Endothelial cell of umbilical vein (primary cell): ENCODE measurements at regions of chr11 and their contacts with region 1.

Region 1: GRCh38 chr11:14148653-14149273 is 186.2 kb downstream of the SPON1 start:
- DNase-seq: peak; percentile 36
- H3K4me3 ChIP-seq: no peak overlapping the region
- H3K27ac ChIP-seq: no peak overlapping the region
- H3K4me1 ChIP-seq: no peaks in the 10 kb centered on the region
- H3K27me3 ChIP-seq: peaks cover 0 to under 1% of the 10 kb centered on the region in 2 experiments
- CTCF ChIP-seq: peak; percentile 21 to 38
- POLR2A ChIP-seq: no peak

Region 2: DNA sequence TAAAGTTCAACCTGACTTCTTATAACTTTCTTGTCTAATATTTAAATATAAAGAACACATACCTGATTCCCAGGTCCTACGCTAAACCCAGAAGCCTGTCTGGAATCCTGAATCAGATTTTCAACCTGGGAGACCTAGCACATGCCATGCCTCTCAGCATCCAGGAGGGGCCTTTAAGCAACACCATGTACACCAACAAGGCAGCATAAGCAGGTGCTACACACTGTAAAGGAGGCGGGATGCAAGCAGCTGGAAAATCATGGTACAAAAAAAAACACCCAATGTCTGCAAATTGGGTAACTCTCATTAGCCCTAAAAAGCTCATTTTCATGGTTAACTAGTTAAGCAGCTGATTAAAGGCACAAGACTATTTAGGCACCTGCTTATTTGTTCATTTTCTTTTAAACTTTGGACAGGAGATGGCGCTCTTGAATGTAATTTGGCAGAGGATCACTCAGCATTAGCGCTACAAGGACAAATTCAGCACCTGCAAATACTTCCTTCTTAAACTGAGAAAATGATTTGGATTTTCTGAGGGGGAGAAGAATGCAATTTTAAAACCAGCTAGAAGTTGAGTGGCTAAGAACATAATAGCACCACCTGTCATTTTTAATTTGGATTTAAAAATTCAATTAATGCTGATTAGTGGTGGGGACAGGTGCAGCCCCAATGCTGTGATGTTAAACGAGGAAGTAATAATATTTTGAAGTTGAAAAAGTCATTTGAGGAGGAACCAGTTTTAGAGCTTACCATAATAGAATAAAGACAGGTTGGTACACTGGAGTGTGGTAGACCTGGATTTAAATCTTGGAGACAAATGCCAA is 376.3 kb before region 1 on chr11:
- CTCF ChIA-PET with region 1: interaction called, 63 read pairs
- POLR2A ChIA-PET with region 1: no interaction called
- dilution Hi-C with region 1: no loop called
- intact Hi-C with region 1: loop called (anchors 1 kb)
- DNase-seq: peak; percentile 72
- H3K4me3 ChIP-seq: no peak overlapping the region
- H3K27ac ChIP-seq: no peak overlapping the region
- H3K4me1 ChIP-seq: no peaks in the 10 kb centered on the region
- H3K27me3 ChIP-seq: peaks cover 18 to 21% of the 10 kb centered on the region in 2 experiments
- CTCF ChIP-seq: peak; percentile 25 to 27
- POLR2A ChIP-seq: no peak

Region 3: DNA sequence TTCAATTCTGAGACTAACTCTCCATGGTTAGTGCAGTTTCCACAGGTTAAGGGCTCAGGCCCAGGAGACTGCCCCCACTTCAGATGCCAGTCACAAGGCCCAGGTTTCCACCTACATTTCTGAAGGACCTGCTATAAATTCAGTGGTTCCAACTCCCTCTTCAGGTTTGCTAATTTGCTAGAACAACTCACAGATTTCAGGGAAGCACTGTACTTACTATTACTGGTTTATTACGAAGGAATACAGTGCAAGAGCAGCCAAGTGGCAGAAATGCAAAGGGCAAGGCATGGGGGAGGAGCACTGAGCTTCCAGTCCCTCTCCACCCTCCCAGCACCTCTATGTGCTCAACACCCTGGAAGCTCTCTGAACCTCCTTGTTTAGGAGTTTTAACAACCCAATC is 225.6 kb before region 1 on chr11:
- CTCF ChIA-PET with region 1: no interaction called
- POLR2A ChIA-PET with region 1: no interaction called
- dilution Hi-C with region 1: no loop called
- intact Hi-C with region 1: no loop called
- DNase-seq: no peak
- H3K4me3 ChIP-seq: no peak overlapping the region
- H3K27ac ChIP-seq: no peak overlapping the region
- H3K4me1 ChIP-seq: peaks cover 20% of the 10 kb centered on the region
- H3K27me3 ChIP-seq: peaks cover 7 to 17% of the 10 kb centered on the region in 2 experiments
- CTCF ChIP-seq: no peak
- POLR2A ChIP-seq: no peak

Region 4: DNA sequence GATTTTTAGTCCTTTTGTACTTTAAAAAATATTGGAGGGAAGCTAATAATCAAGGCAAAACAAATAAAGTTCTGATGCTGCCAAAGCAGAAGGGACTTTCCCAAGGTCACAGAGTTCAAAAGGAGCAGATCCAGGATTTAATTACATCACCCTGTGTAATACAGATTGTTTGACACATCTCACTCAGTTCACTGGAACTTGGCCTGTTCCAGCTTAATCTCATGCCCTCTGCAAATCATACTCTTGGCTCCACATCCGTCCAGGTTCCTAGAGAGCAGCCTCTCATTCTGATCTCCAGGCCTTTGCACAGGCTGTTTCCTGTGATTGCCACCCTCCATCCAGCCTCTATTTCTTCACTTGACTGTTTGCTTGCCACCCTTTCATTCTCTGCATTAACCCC is 34.5 kb before region 1 on chr11:
- CTCF ChIA-PET with region 1: no interaction called
- POLR2A ChIA-PET with region 1: no interaction called
- dilution Hi-C with region 1: no loop called
- intact Hi-C with region 1: no loop called
- DNase-seq: peak; percentile 13
- H3K4me3 ChIP-seq: no peak overlapping the region
- H3K27ac ChIP-seq: no peak overlapping the region
- H3K4me1 ChIP-seq: no peaks in the 10 kb centered on the region
- H3K27me3 ChIP-seq: no peaks in the 10 kb centered on the region
- CTCF ChIP-seq: no peak
- POLR2A ChIP-seq: no peak